Transverse colon (tissue), 4 donors: ENCODE measurements at regions of chr9 and their contacts with region 1.

Region 1: GRCh38 chr9:108761655-108762347 is 94.0 kb downstream of the ACTL7B start:
- DNase-seq: peak; percentile 61
- H3K4me3 ChIP-seq: no peak overlapping the region
- H3K27ac ChIP-seq: no peak overlapping the region
- H3K4me1 ChIP-seq: peaks cover 0 to 5% (median 0%) of the 10 kb centered on the region in 4 donors
- H3K27me3 ChIP-seq: no peaks in the 10 kb centered on the region
- CTCF ChIP-seq: peak; percentile 78 to 87 (median 84)
- EP300 ChIP-seq: no peak
- POLR2A ChIP-seq: no peak

Region 2: DNA sequence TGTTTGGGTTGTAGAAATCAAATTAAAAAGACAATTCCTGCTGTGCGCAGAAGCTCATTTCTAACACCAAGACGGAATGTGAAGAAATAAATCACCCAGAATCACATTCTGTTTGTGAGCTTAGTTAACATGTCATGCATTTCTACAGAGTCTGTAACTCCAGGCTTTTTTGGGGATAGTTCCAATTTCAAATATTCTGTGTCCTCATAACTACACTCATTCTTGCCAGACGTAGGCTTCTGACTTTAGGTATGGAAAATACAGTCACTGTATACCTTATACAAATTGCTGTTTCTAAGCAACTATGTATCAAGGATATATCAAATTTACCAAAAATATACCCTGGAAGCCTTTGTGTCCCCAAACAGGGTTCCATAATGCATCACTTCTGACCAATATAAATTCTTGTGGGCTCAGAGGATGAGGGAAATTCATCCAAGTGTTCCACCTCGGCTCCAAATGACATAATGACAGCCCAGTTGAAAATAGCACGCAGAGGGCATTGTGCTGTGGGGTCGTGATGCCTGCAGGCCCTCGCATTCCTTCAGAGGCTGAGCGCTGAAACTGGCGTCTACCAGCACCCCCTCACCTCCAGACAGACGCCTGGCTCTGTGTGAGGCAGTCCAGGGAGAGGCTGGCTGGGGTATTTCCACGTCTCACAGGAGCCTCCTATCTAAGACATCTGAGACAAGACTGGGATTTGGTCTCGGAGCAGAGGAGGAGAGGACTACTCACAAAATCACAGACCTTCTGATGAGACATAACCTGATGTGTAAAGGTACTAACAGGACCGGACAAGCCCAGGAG is 1352.0 kb before region 1 on chr9:
- in situ Hi-C with region 1: loop called in 2 of 4 experiments (anchors 10 to 25 kb)
- intact Hi-C with region 1: no loop called
- DNase-seq: no peak
- H3K4me3 ChIP-seq: no peak overlapping the region
- H3K27ac ChIP-seq: no peak overlapping the region
- H3K4me1 ChIP-seq: no peaks in the 10 kb centered on the region
- H3K27me3 ChIP-seq: no peaks in the 10 kb centered on the region
- CTCF ChIP-seq: no peak
- EP300 ChIP-seq: no peak
- POLR2A ChIP-seq: no peak

Region 3: GRCh38 chr9:107425101-107426045 is 1336.4 kb before region 1 on chr9:
- in situ Hi-C with region 1: loop called in 1 of 4 experiments (anchors 25 kb)
- intact Hi-C with region 1: no loop called
- DNase-seq: peak; percentile 68
- H3K4me3 ChIP-seq: peak overlapping the region in 2 of 4 donors; percentile 17 to 39
- H3K27ac ChIP-seq: peak overlapping the region in 3 of 4 donors; percentile 27 to 58 (median 44)
- H3K4me1 ChIP-seq: peaks cover 0 to 14% (median 4%) of the 10 kb centered on the region in 4 donors
- H3K27me3 ChIP-seq: no peaks in the 10 kb centered on the region
- CTCF ChIP-seq: peak; percentile 89 to 99 (median 98)
- EP300 ChIP-seq: no peak
- POLR2A ChIP-seq: no peak

Region 4: DNA sequence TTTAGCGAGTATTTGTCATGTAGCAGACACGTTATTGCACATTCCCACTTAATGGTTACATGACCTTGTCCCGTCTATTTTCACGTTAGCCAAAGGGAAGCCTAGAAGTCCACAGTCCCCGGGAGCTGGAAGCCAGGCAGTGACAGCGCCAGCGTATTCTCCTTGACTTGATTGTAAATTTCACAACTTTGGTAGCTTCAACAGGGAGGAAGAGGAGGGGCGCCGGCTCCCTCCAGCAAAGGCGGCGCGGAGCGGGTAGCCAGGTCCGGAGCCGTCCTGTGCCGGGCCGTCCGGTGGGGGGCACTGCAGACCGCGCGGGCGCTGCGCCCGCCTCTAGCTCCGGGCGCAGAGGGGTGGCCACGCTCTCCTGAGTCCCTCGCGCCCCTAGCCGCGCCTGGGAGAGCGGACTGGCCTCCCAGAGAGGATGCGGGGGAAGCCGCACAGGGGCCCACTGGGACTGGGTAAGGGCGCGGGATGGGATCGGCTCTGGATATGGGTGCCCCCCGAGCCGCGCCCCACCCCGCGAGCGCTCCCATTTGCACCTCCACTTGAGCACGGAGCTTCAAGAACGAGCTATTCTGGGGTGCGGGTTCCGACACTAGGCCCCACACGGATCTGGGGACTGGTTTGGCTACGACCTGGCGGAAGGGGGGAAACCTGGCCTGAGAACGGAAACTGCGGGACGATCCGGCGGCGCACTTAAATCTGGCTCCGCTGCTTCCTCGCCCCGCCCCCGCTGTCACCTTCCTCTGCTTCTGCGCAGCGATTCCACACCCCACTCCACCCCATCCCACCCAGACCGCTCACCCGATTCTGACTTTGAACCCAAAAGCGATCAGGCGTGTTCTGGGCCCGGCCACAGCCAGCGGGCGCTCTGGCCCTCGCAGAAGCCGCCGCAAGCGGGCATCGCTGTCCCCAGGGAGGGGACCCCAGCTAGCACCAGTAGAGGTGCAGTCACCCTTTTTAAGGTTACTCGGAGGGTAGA is 1296.0 kb before region 1 on chr9:
- in situ Hi-C with region 1: loop called in 1 of 4 experiments (anchors 25 kb)
- intact Hi-C with region 1: no loop called
- DNase-seq: peak; percentile 75
- H3K4me3 ChIP-seq: peak overlapping the region; percentile 47 to 68 (median 58)
- H3K27ac ChIP-seq: peak overlapping the region in 3 of 4 donors; percentile 69 to 74 (median 70)
- H3K4me1 ChIP-seq: peaks cover 0 to 14% (median 9%) of the 10 kb centered on the region in 4 donors
- H3K27me3 ChIP-seq: peaks cover 8% of the 10 kb centered on the region
- CTCF ChIP-seq: peak; percentile 75 to 93 (median 91)
- EP300 ChIP-seq: no peak
- POLR2A ChIP-seq: peak; percentile 18

Region 5: DNA sequence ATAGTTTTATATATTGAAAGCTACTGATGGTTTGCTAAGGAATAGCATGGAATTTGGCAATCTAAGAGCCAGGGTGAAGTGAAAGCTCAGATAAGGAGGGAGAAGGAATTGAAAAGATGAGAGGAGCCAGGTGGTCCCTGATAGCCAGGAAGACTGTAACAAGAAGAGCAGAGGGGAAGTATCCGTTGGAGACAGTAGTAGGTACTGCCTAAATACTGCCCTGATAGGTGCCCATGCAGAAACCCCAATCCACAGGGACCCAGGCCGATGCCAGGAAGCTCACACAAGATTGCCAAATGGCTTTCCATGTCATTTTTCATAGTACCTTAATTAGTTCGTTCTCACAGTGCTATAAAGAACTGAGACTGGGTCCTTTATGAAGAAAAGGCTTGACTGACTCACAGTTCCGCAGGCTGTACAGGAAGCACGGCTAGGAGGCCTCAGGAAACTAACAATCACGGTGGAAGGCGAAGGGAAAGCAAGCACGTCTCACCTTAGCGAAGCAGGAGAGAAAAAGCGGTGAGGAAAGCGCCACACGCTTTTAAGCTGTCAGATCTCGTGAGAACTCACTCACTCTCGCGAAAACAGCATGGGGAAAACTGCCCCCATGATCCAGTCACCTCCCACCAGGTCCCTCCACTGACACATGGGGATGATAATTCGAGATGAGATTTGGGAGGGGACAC is 81.0 kb after region 1 on chr9:
- in situ Hi-C with region 1: no loop called
- intact Hi-C with region 1: no loop called
- DNase-seq: no peak
- H3K4me3 ChIP-seq: no peak overlapping the region
- H3K27ac ChIP-seq: no peak overlapping the region
- H3K4me1 ChIP-seq: no peaks in the 10 kb centered on the region
- H3K27me3 ChIP-seq: no peaks in the 10 kb centered on the region
- CTCF ChIP-seq: no peak
- EP300 ChIP-seq: no peak
- POLR2A ChIP-seq: no peak

Region 6: GRCh38 chr9:109143881-109144562 is 382.2 kb after region 1 on chr9:
- in situ Hi-C with region 1: no loop called
- intact Hi-C with region 1: no loop called
- DNase-seq: no peak
- H3K4me3 ChIP-seq: no peak overlapping the region
- H3K27ac ChIP-seq: no peak overlapping the region
- H3K4me1 ChIP-seq: no peaks in the 10 kb centered on the region
- H3K27me3 ChIP-seq: no peaks in the 10 kb centered on the region
- CTCF ChIP-seq: peak in 4 of 5 experiments; percentile 30 to 43 (median 40)
- EP300 ChIP-seq: no peak
- POLR2A ChIP-seq: no peak